ENCODE measurements at regions of chr16 and their contacts with region 1.

Region 1: DNA sequence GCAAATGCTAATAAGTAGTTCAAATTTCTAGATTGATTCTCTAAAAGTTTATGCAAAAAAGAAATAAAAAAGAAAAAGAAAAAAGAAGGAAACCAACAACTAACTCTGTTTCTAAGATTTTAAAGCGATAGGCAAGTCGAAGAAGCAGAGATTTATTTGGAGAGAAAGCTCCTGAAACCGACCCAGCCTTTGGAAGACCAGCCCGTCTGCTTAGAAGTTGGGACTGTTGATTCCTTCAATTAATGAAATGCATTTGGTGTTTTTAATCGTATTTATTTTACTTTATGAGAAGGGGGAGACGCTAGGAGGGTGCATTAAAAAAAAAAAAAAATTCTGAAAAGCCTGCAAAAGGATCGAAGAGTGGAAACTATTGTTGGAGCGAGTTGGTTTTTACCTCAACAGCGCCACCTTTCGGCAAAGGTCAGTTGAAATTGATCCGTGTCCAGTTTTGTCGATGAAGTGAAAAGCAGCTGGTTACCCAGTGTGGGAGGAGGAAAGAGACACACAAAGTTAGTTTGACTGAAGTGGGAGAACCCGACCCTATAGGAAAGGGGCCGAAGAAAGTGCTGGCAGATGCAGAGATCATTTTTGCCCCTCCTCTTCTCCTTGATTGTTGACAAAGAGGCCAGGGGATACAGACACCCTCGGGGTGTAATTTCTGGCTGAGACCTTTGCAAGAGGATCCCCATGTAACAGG is 1.5 kb upstream of the MAF start:
- DNase-seq: peak; percentile 92
- ATAC-seq: peak; percentile 14
- H3K4me3 Mint-ChIP-seq: peak overlapping the region; percentile 84
- H3K27ac Mint-ChIP-seq: peak overlapping the region; percentile 92
- H3K4me1 Mint-ChIP-seq: peaks cover 32% of the 10 kb centered on the region
- H3K27me3 Mint-ChIP-seq: peaks cover 24% of the 10 kb centered on the region

Region 2: GRCh38 chr16:78503602-78504001 is 1098.5 kb before region 1 on chr16:
- CTCF ChIA-PET with region 1: interaction called, 4 read pairs
- POLR2A ChIA-PET with region 1: no interaction called
- intact Hi-C with region 1: loop called (anchors 1 to 2 kb)
- DNase-seq: peak; percentile 67
- ATAC-seq: peak; percentile 49
- H3K4me3 Mint-ChIP-seq: no peak overlapping the region
- H3K27ac Mint-ChIP-seq: no peak overlapping the region
- H3K4me1 Mint-ChIP-seq: no peaks in the 10 kb centered on the region
- H3K27me3 Mint-ChIP-seq: no peaks in the 10 kb centered on the region

Region 3: GRCh38 chr16:78778101-78779004 is 823.7 kb before region 1 on chr16:
- CTCF ChIA-PET with region 1: interaction called, 4 read pairs
- POLR2A ChIA-PET with region 1: interaction called, 8 read pairs
- intact Hi-C with region 1: loop called (anchors 2 kb)
- DNase-seq: peak; percentile 77
- ATAC-seq: peak; percentile 66
- H3K4me3 Mint-ChIP-seq: peak overlapping the region; percentile 41
- H3K27ac Mint-ChIP-seq: peak overlapping the region; percentile 94
- H3K4me1 Mint-ChIP-seq: peaks cover 70% of the 10 kb centered on the region
- H3K27me3 Mint-ChIP-seq: no peaks in the 10 kb centered on the region

Region 4: GRCh38 chr16:79008036-79008868 is 593.8 kb before region 1 on chr16:
- CTCF ChIA-PET with region 1: no interaction called
- POLR2A ChIA-PET with region 1: no interaction called
- intact Hi-C with region 1: loop called in 1 of 2 experiments (anchors 5 kb)
- DNase-seq: peak; percentile 49
- ATAC-seq: peak; percentile 76
- H3K4me3 Mint-ChIP-seq: no peak overlapping the region
- H3K27ac Mint-ChIP-seq: peak overlapping the region; percentile 79
- H3K4me1 Mint-ChIP-seq: peaks cover 35% of the 10 kb centered on the region
- H3K27me3 Mint-ChIP-seq: no peaks in the 10 kb centered on the region

Region 5: GRCh38 chr16:79286646-79287423 is 315.2 kb before region 1 on chr16:
- CTCF ChIA-PET with region 1: interaction called, 3 read pairs
- POLR2A ChIA-PET with region 1: no interaction called
- intact Hi-C with region 1: loop called in 1 of 2 experiments (anchors 5 kb)
- DNase-seq: peak; percentile 63
- ATAC-seq: peak; percentile 70
- H3K4me3 Mint-ChIP-seq: peak overlapping the region; percentile 34
- H3K27ac Mint-ChIP-seq: peak overlapping the region; percentile 86
- H3K4me1 Mint-ChIP-seq: peaks cover 52% of the 10 kb centered on the region
- H3K27me3 Mint-ChIP-seq: peaks cover 12% of the 10 kb centered on the region

Region 6: GRCh38 chr16:79528338-79528737 is 73.7 kb before region 1 on chr16:
- CTCF ChIA-PET with region 1: no interaction called
- POLR2A ChIA-PET with region 1: no interaction called
- intact Hi-C with region 1: no loop called
- DNase-seq: no peak
- ATAC-seq: no peak
- H3K4me3 Mint-ChIP-seq: no peak overlapping the region
- H3K27ac Mint-ChIP-seq: no peak overlapping the region
- H3K4me1 Mint-ChIP-seq: no peaks in the 10 kb centered on the region
- H3K27me3 Mint-ChIP-seq: peaks cover 6% of the 10 kb centered on the region

Region 7: GRCh38 chr16:79628501-79628975 is 26.5 kb after region 1 on chr16:
- CTCF ChIA-PET with region 1: interaction called, 3 read pairs
- POLR2A ChIA-PET with region 1: interaction called, 7 read pairs
- intact Hi-C with region 1: loop called (anchors 1 kb)
- DNase-seq: peak; percentile 86
- ATAC-seq: peak; percentile 94
- H3K4me3 Mint-ChIP-seq: no peak overlapping the region
- H3K27ac Mint-ChIP-seq: peak overlapping the region; percentile 71
- H3K4me1 Mint-ChIP-seq: peaks cover 14% of the 10 kb centered on the region
- H3K27me3 Mint-ChIP-seq: peaks cover 24% of the 10 kb centered on the region

Region 8: GRCh38 chr16:80466024-80466987 is 864.2 kb after region 1 on chr16:
- CTCF ChIA-PET with region 1: no interaction called
- POLR2A ChIA-PET with region 1: no interaction called
- intact Hi-C with region 1: loop called in 1 of 2 experiments (anchors 5 kb)
- DNase-seq: peak; percentile 82
- ATAC-seq: peak; percentile 78
- H3K4me3 Mint-ChIP-seq: no peak overlapping the region
- H3K27ac Mint-ChIP-seq: no peak overlapping the region
- H3K4me1 Mint-ChIP-seq: no peaks in the 10 kb centered on the region
- H3K27me3 Mint-ChIP-seq: peaks cover 9% of the 10 kb centered on the region